ENCODE measurements at regions of chr7 and their contacts with region 1.

Region 1: GRCh38 chr7:30740424-30741181 is 11.3 kb upstream of the INMT start:
- DNase-seq: no peak
- H3K4me3 ChIP-seq: no peak overlapping the region
- H3K27ac ChIP-seq: no peak overlapping the region
- H3K4me1 ChIP-seq: peaks cover 5 to 12% (median 8%) of the 10 kb centered on the region in 4 donors
- H3K27me3 ChIP-seq: no peaks in the 10 kb centered on the region
- CTCF ChIP-seq: peak; percentile 95 to 100 (median 98)
- EP300 ChIP-seq: no peak
- POLR2A ChIP-seq: no peak

Region 2: DNA sequence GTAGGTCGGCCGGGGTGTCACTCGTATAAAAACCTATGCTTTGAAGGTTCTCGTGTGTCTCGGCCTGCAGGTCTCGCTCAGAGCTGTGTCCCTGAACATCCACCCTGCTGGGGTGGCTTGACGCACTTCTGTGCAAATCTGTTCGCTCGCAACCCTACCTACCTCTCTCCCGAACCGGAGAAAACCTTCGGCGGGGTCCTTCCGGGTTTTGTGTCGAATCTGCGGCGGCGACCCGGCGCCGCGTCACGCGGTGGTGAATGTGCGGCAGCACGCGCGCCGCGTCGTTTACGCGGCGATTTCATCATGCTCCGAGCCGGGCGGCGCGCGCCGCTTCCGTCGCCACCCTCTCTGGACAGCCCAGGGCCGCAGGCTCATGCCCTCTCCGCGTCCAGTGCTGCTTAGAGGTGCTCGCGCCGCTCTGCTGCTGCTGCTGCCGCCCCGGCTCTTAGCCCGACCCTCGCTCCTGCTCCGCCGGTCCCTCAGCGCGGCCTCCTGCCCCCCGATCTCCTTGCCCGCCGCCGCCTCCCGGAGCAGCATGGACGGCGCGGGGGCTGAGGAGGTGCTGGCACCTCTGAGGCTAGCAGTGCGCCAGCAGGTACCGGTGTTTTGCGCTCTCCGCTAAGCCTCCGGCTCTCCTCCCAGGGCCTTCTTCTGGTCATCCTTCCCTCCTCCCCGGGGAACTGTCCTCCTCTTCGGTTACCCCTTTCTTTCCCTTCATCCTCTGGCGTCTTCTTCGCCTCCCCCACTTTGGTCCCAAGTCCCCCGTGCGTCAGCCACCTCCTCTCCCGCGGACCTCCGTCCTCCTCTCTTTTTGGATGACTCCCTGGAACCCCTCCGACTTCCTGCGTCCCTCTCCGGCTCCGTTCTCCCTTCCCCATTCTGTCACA is 145.8 kb before region 1 on chr7 and contains the start of gene GARS1:
- intact Hi-C with region 1: loop called (anchors 5 kb)
- DNase-seq: peak; percentile 97
- H3K4me3 ChIP-seq: peak within 1 kb of the TSS; percentile 83 to 89 (median 88)
- H3K27ac ChIP-seq: peak within 1 kb of the TSS; percentile 93 to 96 (median 94)
- H3K4me1 ChIP-seq: peaks cover 17 to 62% (median 35%) of the 10 kb centered on the region in 4 donors
- H3K27me3 ChIP-seq: no peaks in the 10 kb centered on the region
- CTCF ChIP-seq: no peak
- EP300 ChIP-seq: no peak
- POLR2A ChIP-seq: peak; percentile 72
- total RNA-seq, gene GARS1: 43.6 to 71.0 (median 63.0) TPM

Region 3: GRCh38 chr7:30682212-30683083 is 58.2 kb before region 1 on chr7 and contains the start of gene CRHR2:
- intact Hi-C with region 1: loop called (anchors 2 kb)
- DNase-seq: no peak
- H3K4me3 ChIP-seq: peak within 1 kb of the TSS; percentile 56 to 68 (median 58)
- H3K27ac ChIP-seq: no peak within 1 kb of the TSS
- H3K4me1 ChIP-seq: peaks cover 16 to 24% (median 18%) of the 10 kb centered on the region in 4 donors
- H3K27me3 ChIP-seq: peaks cover 9 to 80% (median 20%) of the 10 kb centered on the region in 4 donors
- CTCF ChIP-seq: peak; percentile 39 to 49 (median 43)
- EP300 ChIP-seq: no peak
- POLR2A ChIP-seq: no peak
- total RNA-seq, gene CRHR2: 0.13 to 0.29 TPM in 2 of 4 donors, not detected in the others

Region 4: GRCh38 chr7:30974605-30975255 is 234.1 kb after region 1 on chr7:
- intact Hi-C with region 1: loop called (anchors 5 kb)
- DNase-seq: no peak
- H3K4me3 ChIP-seq: no peak overlapping the region
- H3K27ac ChIP-seq: no peak overlapping the region
- H3K4me1 ChIP-seq: peaks cover 0 to 14% (median 10%) of the 10 kb centered on the region in 4 donors
- H3K27me3 ChIP-seq: peaks cover 0 to 12% (median 0%) of the 10 kb centered on the region in 4 donors
- CTCF ChIP-seq: peak; percentile 64 to 80 (median 68)
- EP300 ChIP-seq: no peak
- POLR2A ChIP-seq: no peak